PC-9 (cell line): ENCODE measurements at regions of chrX and their contacts with region 1.

Region 1: GRCh38 chrX:110847334-110847733 is 51.7 kb upstream of the CHRDL1 start:
- DNase-seq: peak; percentile 18 to 58
- H3K4me3 ChIP-seq: no peak overlapping the region
- H3K27ac ChIP-seq: no peak overlapping the region
- H3K4me1 ChIP-seq: peaks cover 15% of the 10 kb centered on the region
- H3K27me3 ChIP-seq: no peaks in the 10 kb centered on the region
- CTCF ChIP-seq: peak; percentile 81

Region 2: GRCh38 chrX:110418316-110419235 is 428.8 kb before region 1 on chrX:
- CTCF ChIA-PET with region 1: interaction called, 10 read pairs
- POLR2A ChIA-PET with region 1: no interaction called
- intact Hi-C with region 1: no loop called
- DNase-seq: no peak
- H3K4me3 ChIP-seq: no peak overlapping the region
- H3K27ac ChIP-seq: no peak overlapping the region
- H3K4me1 ChIP-seq: 0 out of 2 replicates have a peak, but pooled peaks cover 7% of the 10 kb centered on the region
- H3K27me3 ChIP-seq: no peaks in the 10 kb centered on the region
- CTCF ChIP-seq: peak; percentile 48; the same call in 1 of the 2 replicates

Region 3: DNA sequence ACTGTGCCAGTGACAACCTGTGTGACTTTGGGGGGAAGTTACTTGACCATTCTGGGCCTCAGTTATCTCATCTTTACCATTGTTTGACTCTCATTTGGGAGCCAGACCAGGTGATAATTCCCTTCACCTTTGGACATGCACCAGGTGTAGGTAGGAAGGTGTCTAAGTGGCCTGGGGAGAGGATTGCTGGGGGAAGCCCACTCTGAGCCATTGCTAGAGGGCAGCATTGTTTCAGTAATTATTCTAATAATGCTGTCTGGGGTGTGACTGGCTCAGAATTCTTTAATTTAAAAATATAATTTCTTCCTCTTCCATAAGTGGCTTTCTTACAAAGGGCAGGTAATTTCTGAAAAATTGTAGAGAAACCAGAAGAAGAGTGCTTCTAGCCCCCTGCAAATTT is 384.4 kb before region 1 on chrX:
- CTCF ChIA-PET with region 1: interaction called, 7 read pairs
- POLR2A ChIA-PET with region 1: no interaction called
- intact Hi-C with region 1: loop called (anchors 1 kb)
- DNase-seq: peak in 1 of 2 experiments; percentile 15
- H3K4me3 ChIP-seq: no peak overlapping the region
- H3K27ac ChIP-seq: no peak overlapping the region
- H3K4me1 ChIP-seq: no peaks in the 10 kb centered on the region
- H3K27me3 ChIP-seq: no peaks in the 10 kb centered on the region
- CTCF ChIP-seq: peak; percentile 61

Region 4: DNA sequence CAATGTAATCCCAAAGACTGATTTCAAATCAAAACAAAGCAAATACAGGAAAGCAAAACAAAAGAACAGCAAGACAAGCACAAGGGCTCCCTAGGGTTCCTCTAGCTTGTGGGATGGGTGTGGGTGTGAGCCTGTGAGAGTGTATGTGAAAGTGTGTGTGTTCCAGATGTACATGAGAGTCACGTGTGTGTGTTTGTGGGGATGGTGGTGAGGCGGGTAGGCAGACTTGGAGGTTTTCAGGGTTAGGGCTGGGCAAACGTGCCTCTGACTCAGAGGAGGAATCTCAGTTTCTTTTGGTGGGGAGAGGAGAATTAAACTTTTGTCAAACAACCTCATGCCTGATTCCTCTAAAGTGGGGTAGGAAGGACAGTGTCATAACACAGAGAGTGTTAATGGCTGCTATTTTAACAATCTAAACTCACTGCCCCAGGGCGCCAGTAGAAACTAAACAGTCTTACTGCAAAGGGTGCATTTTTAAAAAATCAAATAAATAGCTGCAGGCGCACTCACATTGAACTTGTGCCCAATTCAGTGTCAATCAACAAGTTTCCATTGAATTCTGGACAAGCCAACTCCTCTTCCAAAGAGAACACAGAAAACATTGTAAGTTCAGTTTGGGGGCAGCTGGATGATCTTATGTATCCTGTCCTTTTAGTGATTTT is 103.5 kb before region 1 on chrX:
- CTCF ChIA-PET with region 1: no interaction called
- POLR2A ChIA-PET with region 1: no interaction called
- intact Hi-C with region 1: loop called (anchors 5 kb)
- DNase-seq: no peak
- H3K4me3 ChIP-seq: no peak overlapping the region
- H3K27ac ChIP-seq: no peak overlapping the region
- H3K4me1 ChIP-seq: peaks cover 29% of the 10 kb centered on the region
- H3K27me3 ChIP-seq: no peaks in the 10 kb centered on the region
- CTCF ChIP-seq: no peak

Region 5: DNA sequence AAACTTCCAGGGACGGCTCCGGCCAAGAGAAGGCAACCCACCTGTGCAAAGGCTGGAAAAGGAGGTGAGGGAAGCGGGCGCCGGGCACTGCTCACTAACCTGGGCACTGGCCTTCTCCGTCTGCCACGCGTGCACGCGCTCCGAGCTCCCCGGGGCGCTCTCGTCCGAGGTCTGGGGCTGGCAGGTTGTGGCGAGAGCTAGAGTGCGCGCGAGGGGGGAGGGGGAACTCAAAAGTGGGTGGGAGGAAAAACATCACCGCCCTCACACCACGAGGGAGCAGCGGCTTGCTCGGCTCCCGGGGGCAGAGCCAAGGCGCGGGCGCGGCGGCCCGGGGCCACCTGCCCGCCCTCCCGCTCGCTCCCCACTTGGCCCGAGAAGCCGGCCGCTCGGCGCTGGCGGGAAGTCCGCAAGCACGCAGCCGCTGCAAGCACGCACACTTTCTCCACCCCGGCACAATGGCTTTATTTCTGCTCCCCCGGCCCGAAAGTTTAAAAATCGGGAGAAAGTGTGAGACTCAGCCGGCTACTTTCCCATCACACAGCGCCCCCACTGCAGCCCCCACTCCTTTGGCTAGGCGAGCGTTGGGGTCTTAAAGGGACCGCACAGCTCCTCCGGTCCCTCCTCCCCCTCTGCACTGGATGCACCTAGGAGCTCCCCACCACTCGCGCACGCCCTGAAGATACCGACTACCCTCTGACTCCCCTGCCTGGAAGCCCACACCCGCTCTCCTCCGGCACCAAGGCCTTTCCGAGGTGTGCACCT is 51.5 kb before region 1 on chrX and contains the start of gene CHRDL1:
- CTCF ChIA-PET with region 1: no interaction called
- POLR2A ChIA-PET with region 1: no interaction called
- intact Hi-C with region 1: loop called (anchors 2 kb)
- DNase-seq: peak in 1 of 2 experiments; percentile 77
- H3K4me3 ChIP-seq: peak within 1 kb of the TSS; percentile 63
- H3K27ac ChIP-seq: no peak within 1 kb of the TSS
- H3K4me1 ChIP-seq: peaks cover 5% of the 10 kb centered on the region; the same call in 1 of the 2 replicates
- H3K27me3 ChIP-seq: no peaks in the 10 kb centered on the region
- CTCF ChIP-seq: no peak
- total RNA-seq, gene CHRDL1: 18.8 and 25.7 TPM in 2 replicates